ENCODE measurements at regions of chrX and their contacts with region 1.

Region 1: GRCh38 chrX:15143050-15143824 is 126.6 kb downstream of the ASB9 start:
- DNase-seq: peak; percentile 45
- H3K4me3 ChIP-seq: no peak overlapping the region
- H3K27ac ChIP-seq: no peak overlapping the region
- H3K4me1 ChIP-seq: no peaks in the 10 kb centered on the region
- H3K27me3 ChIP-seq: 0 out of 2 replicates have a peak, but pooled peaks cover 6% of the 10 kb centered on the region
- CTCF ChIP-seq: peak; percentile 88
- EP300 ChIP-seq: no peak
- RAD21 ChIP-seq: peak; percentile 82

Region 2: DNA sequence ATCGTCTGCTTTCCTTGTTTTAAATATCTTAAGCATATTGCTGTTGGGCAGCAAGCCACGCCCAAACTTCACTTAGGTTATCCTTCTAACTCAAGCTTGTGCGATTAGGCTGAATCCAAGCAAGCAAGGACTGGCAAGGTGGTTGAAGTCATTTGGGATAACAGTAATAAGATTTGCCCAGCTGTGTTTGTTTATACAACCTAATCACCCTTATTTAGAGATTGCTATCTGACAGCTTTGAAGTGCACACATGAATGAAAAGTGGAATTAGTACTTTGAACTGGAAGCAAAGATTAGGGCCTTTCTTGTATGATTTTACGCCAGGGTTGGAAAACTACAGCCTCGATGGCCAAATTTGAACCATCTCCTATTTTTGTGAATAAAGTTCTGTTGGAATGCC is 55.5 kb before region 1 on chrX:
- CTCF ChIA-PET with region 1: no interaction called
- POLR2A ChIA-PET with region 1: no interaction called
- DNase-seq: no peak
- H3K4me3 ChIP-seq: no peak overlapping the region
- H3K27ac ChIP-seq: no peak overlapping the region
- H3K4me1 ChIP-seq: no peaks in the 10 kb centered on the region
- H3K27me3 ChIP-seq: no peaks in the 10 kb centered on the region
- CTCF ChIP-seq: no peak
- EP300 ChIP-seq: no peak
- RAD21 ChIP-seq: no peak

Region 3: GRCh38 chrX:15128861-15129260 is 14.4 kb before region 1 on chrX:
- CTCF ChIA-PET with region 1: interaction called, 14 read pairs
- POLR2A ChIA-PET with region 1: no interaction called
- DNase-seq: no peak
- H3K4me3 ChIP-seq: no peak overlapping the region
- H3K27ac ChIP-seq: no peak overlapping the region
- H3K4me1 ChIP-seq: no peaks in the 10 kb centered on the region
- H3K27me3 ChIP-seq: no peaks in the 10 kb centered on the region
- CTCF ChIP-seq: no peak
- EP300 ChIP-seq: no peak
- RAD21 ChIP-seq: no peak

Region 4: DNA sequence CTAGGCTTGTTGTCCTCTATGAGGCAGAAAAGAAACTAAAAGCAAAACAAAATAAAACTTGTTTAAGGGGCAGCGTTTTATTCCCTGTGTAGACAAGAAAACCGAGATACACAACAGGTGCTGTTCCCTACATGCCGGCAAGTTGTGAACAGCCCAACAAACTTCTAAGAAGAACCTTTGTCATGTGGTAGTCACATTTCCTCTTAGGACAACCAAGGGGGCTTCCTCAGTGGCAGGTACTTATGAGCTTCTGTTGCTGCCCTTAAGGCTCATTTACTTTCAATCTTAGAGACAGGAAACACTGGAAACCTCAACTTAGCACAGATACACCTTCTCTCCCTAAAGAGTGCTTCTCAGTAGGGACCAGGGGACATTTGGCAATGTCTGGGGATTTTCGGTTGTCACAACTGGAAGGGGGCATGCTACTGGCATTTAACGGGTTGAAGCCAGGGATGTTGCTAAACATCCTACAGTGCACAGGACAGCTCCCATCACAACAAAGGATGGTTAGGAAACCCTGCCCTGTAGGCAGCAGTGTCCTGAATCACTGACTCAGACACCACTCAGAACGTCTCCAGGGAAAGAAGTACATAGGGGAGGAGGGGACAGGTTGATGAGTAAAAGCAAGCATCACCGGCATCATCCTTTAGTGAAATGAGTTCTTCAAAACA is 15.6 kb after region 1 on chrX:
- CTCF ChIA-PET with region 1: interaction called, 11 read pairs
- POLR2A ChIA-PET with region 1: no interaction called
- DNase-seq: no peak
- H3K4me3 ChIP-seq: no peak overlapping the region
- H3K27ac ChIP-seq: no peak overlapping the region
- H3K4me1 ChIP-seq: no peaks in the 10 kb centered on the region
- H3K27me3 ChIP-seq: no peaks in the 10 kb centered on the region
- CTCF ChIP-seq: no peak
- EP300 ChIP-seq: no peak
- RAD21 ChIP-seq: no peak

Measured in SK-N-SH (cell line).